IMR-90 (cell line): ENCODE measurements at regions of chr2 and their contacts with region 1.

Region 1: DNA sequence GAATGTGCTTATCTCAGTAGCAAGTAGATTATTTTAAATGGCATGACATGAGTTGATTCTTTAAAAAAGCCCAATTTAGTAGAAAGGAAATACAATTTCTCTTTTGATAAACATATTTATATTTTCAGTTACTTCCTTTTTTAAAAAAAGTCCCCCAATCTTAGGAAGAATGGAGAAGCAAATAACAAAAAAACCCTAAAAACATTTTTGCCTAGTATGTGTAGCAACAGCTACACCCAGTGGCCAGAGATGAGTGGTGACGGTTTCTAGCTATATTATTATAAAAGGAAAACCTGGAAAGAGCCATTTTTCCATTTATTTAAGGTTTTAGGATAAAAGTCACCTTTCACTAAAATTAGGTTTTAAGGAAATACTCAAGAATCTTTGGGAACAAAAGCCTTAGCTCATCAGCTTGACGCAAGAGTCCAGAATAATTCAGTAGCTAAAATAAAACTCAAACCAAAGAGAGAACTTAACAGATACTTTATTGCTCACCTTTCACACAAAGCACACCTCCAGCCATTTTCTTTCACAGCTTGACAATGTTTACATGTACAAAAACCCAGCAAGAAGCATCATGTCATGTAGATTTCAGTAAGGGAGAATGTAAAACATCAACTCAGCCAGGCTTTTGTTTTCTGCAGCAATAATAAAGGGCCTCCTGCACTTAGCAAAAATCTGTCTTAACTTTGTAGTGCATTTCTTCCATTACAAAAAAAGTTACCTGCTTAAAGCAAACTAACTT is 15.7 kb downstream of the FAM98A start:
- DNase-seq: peak; percentile 52
- ATAC-seq: peak; percentile 77
- H3K4me3 ChIP-seq: no peak overlapping the region
- H3K27ac ChIP-seq: no peak overlapping the region
- H3K4me1 ChIP-seq: peaks cover 2% of the 10 kb centered on the region; the same call in 1 of the 2 replicates
- H3K27me3 ChIP-seq: no peaks in the 10 kb centered on the region
- CTCF ChIP-seq: peak; percentile 83
- POLR2A ChIP-seq: no peak
- RAD21 ChIP-seq: peak; percentile 87

Region 2: DNA sequence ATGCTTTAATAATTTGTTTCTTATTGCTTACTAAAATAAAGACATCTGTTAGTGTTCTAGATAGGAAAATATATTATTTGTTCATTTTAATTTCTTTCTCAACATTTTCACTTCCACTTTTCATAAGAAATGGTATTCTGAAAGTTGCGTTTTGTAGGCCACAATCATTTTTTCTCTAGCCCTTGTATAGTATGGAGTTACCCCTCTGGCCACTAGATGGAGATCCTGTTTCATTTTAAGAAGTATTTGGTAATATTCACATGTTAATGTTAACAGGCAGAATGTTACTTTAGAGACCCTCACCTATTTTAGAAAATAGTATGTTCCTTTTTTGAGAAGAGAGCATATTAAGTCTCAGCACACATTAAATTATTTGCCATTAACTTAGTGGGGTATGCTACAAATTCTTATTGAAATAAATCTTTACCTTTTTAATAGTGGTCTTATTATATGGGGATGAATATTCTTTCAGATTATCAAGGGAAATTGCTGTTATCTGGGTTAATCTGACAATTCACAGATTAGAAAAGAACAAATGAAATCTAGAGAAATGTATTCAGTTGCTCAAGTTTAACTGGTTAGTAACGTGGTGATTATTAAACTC is 1029.4 kb before region 1 on chr2:
- CTCF ChIA-PET with region 1: no interaction called
- POLR2A ChIA-PET with region 1: no interaction called
- dilution Hi-C with region 1: no loop called
- in situ Hi-C with region 1: no loop called
- intact Hi-C with region 1: loop called (anchors 5 kb)
- DNase-seq: peak; percentile 61
- ATAC-seq: peak; percentile 82
- H3K4me3 ChIP-seq: no peak overlapping the region
- H3K27ac ChIP-seq: no peak overlapping the region
- H3K4me1 ChIP-seq: no peaks in the 10 kb centered on the region
- H3K27me3 ChIP-seq: no peaks in the 10 kb centered on the region
- CTCF ChIP-seq: peak; percentile 74
- POLR2A ChIP-seq: no peak
- RAD21 ChIP-seq: peak; percentile 64

Region 3: GRCh38 chr2:32963941-32964340 is 619.4 kb before region 1 on chr2:
- CTCF ChIA-PET with region 1: no interaction called
- POLR2A ChIA-PET with region 1: no interaction called
- dilution Hi-C with region 1: no loop called
- in situ Hi-C with region 1: no loop called
- intact Hi-C with region 1: loop called (anchors 10 kb)
- DNase-seq: peak; percentile 83
- ATAC-seq: peak; percentile 90
- H3K4me3 ChIP-seq: no peak overlapping the region
- H3K27ac ChIP-seq: no peak overlapping the region
- H3K4me1 ChIP-seq: 0 out of 2 replicates have a peak, but pooled peaks cover 2% of the 10 kb centered on the region
- H3K27me3 ChIP-seq: no peaks in the 10 kb centered on the region
- CTCF ChIP-seq: no peak
- POLR2A ChIP-seq: no peak
- RAD21 ChIP-seq: no peak

Region 4: GRCh38 chr2:33291278-33292013 is 291.9 kb before region 1 on chr2:
- CTCF ChIA-PET with region 1: no interaction called
- POLR2A ChIA-PET with region 1: no interaction called
- dilution Hi-C with region 1: no loop called
- in situ Hi-C with region 1: no loop called
- intact Hi-C with region 1: loop called (anchors 5 kb)
- DNase-seq: peak; percentile 86
- ATAC-seq: peak; percentile 77
- H3K4me3 ChIP-seq: no peak overlapping the region
- H3K27ac ChIP-seq: peak overlapping the region; percentile 16; the same call in 1 of the 2 replicates
- H3K4me1 ChIP-seq: peaks cover 15% of the 10 kb centered on the region
- H3K27me3 ChIP-seq: no peaks in the 10 kb centered on the region
- CTCF ChIP-seq: no peak
- POLR2A ChIP-seq: no peak
- RAD21 ChIP-seq: no peak

Region 5: GRCh38 chr2:33441235-33441810 is 142.0 kb before region 1 on chr2:
- CTCF ChIA-PET with region 1: interaction called, 5 read pairs
- POLR2A ChIA-PET with region 1: no interaction called
- dilution Hi-C with region 1: no loop called
- in situ Hi-C with region 1: no loop called
- intact Hi-C with region 1: loop called (anchors 1 kb)
- DNase-seq: peak; percentile 78
- ATAC-seq: peak; percentile 80
- H3K4me3 ChIP-seq: no peak overlapping the region
- H3K27ac ChIP-seq: no peak overlapping the region
- H3K4me1 ChIP-seq: peaks cover 6% of the 10 kb centered on the region; the same call in 1 of the 2 replicates
- H3K27me3 ChIP-seq: no peaks in the 10 kb centered on the region
- CTCF ChIP-seq: peak; percentile 90
- POLR2A ChIP-seq: no peak
- RAD21 ChIP-seq: peak; percentile 95

Region 6: DNA sequence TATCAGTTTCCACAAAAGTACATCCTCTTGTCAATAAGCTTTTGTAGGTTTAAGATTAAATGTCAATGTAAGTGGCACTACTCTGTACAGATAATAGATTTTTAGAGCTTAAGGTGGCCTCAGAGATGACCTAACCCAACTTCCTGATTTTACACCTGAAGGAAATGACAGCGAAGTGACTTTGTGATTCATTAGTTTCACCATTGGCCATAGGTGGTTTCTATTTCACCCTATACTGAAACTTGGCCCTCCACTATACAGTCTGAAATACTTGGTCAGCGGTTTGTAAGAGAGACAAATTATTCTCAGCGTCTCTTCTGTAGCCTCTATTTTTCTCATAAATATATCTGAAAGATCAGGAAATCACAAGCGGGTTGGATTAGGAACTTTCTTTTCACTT is 346.1 kb after region 1 on chr2:
- CTCF ChIA-PET with region 1: no interaction called
- POLR2A ChIA-PET with region 1: no interaction called
- dilution Hi-C with region 1: no loop called
- in situ Hi-C with region 1: no loop called
- intact Hi-C with region 1: no loop called
- DNase-seq: no peak
- ATAC-seq: no peak
- H3K4me3 ChIP-seq: no peak overlapping the region
- H3K27ac ChIP-seq: no peak overlapping the region
- H3K4me1 ChIP-seq: no peaks in the 10 kb centered on the region
- H3K27me3 ChIP-seq: no peaks in the 10 kb centered on the region
- CTCF ChIP-seq: no peak
- POLR2A ChIP-seq: no peak
- RAD21 ChIP-seq: no peak